Activated CD4-positive, alpha-beta T cell treated with anti-CD3 and anti-CD28 coated beads, Interleukin-2, amount 10 ng/mL, durations not matched to agents 24 days and 14 days (primary cell): ENCODE measurements at regions of chr11 and their contacts with region 1.

Region 1: DNA sequence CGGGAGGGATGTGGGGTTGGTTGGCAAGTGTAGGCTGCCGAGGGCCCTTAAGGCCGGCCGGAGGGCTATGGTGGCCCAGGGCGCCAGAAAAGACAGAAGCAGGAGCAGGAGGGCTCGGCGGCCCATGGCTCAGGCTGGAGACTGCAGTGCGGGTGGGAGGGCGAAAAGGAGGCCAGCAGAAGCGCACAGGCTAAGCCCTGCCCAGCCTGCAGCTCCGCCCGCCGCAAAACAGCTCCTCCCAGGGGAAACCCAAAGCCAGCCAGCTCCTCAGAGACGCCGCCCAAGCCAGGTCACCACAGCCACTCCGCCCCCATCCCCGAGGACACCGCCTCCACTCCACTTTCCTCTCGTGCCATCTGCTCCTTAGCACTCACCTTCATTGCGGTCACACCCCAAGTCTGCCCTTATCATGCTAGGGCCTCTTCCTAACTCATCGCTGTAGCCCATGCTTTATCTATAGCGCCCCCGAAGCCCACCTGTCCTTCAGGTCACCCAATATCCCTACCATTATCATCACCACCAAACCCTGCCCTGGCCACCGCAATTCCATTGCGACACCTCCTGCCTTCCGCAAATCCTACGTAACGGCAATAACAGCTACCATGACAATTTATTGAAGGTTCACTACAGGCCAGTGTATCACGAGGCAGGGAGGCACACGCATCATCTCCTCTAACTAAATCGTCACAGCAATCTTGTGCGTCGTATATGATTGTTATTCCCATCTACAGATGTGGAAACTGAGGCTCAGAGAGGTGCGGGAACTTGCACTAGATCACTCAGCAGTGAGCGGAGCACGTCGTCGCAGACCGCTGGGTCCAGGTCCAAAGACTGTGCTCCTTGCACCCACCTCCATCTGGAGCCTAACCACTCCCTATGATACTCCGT is at the start of gene PRCP:
- DNase-seq: peak; percentile 98
- H3K4me3 Mint-ChIP-seq: peak within 1 kb of the TSS; percentile 92
- H3K27ac Mint-ChIP-seq: peak within 1 kb of the TSS; percentile 100
- H3K4me1 Mint-ChIP-seq: peaks cover 51% of the 10 kb centered on the region
- H3K27me3 Mint-ChIP-seq: no peaks in the 10 kb centered on the region
- total RNA-seq, gene PRCP: 20.6 and 22.6 TPM in 2 replicates

Region 2: GRCh38 chr11:82867495-82868082 is 32.9 kb before region 1 on chr11:
- intact Hi-C with region 1: loop called (anchors 2 kb)
- DNase-seq: peak; percentile 93
- H3K4me3 Mint-ChIP-seq: no peak overlapping the region
- H3K27ac Mint-ChIP-seq: no peak overlapping the region
- H3K4me1 Mint-ChIP-seq: peaks cover 6% of the 10 kb centered on the region
- H3K27me3 Mint-ChIP-seq: peaks cover 2% of the 10 kb centered on the region

Region 3: DNA sequence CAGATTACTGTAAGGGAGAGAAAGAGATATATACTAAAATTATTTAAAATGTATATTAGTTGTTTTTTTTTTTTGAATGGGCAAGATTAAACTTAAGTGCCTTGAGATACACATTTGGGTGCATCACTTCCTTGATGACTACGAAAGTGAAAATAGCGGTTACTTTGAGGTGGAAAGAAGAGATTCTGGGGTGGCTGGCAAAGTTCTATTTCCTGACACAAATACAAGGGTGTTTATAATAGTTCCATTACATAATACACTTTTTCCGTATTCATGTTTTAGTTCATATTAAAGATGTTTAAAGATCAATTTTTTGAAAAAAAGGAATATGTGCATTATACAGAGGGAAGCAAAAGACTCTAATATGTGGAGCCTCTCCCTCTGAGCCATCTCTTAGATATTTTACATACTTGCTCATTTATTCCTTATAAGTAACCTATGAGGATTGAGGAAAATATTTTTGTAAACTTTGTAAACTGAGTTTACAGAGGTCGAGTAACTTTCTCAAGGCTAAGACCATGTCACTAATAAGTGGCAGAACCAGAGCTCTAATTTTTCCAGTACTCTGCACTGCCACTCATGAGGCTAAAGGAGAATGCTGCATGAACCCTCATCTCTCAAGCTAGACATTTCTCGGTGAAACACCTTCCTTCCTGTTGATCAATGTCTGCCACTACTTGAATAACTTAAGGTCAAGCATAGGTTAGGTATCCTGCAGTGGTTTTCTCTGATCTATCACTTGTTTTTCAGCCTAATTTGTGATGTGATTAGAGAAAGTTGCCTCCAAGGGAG is 59.7 kb after region 1 on chr11:
- intact Hi-C with region 1: loop called (anchors 2 kb)
- DNase-seq: peak; percentile 86
- H3K4me3 Mint-ChIP-seq: peak overlapping the region; percentile 62
- H3K27ac Mint-ChIP-seq: peak overlapping the region; percentile 62
- H3K4me1 Mint-ChIP-seq: peaks cover 51% of the 10 kb centered on the region
- H3K27me3 Mint-ChIP-seq: peaks cover 2% of the 10 kb centered on the region

Region 4: DNA sequence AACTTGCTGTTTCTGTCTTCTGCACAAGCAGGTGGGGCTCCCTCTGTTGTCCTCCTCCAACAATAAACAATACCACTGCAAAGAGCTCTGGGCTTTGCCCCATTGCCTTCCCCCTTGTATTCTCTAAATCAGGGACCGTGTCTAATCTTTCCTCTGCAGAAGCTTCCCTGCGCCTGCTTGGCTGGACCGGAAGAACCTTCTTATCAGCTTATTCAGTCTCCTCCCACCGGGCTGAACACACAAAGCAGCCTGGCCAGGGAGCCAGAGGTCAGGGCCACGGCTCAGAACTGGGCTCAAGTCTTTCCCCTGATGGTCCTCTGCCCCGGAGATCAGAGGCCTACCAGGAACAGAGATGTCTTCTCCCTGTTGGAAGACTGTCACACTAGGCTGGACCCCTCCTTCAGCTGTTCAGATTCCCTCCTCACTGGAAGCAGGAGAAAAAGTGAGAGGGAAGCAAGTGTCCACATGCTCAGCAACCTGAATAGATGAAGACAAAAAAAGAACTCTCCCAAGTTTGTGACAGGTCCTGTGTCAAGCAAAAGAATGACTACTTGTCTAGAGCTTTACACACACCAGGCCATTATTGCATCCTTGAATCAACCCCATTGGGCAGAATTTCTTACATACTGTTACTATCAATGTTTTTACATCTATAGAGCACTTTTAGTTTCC is 107.5 kb after region 1 on chr11:
- intact Hi-C with region 1: loop called (anchors 2 kb)
- DNase-seq: no peak
- H3K4me3 Mint-ChIP-seq: peak overlapping the region; percentile 6
- H3K27ac Mint-ChIP-seq: no peak overlapping the region
- H3K4me1 Mint-ChIP-seq: peaks cover 35% of the 10 kb centered on the region
- H3K27me3 Mint-ChIP-seq: no peaks in the 10 kb centered on the region

Region 5: GRCh38 chr11:83156150-83156995 is 255.9 kb after region 1 on chr11:
- intact Hi-C with region 1: loop called (anchors 1 kb)
- DNase-seq: no peak
- H3K4me3 Mint-ChIP-seq: peak overlapping the region; percentile 100
- H3K27ac Mint-ChIP-seq: peak overlapping the region; percentile 100
- H3K4me1 Mint-ChIP-seq: peaks cover 28% of the 10 kb centered on the region
- H3K27me3 Mint-ChIP-seq: no peaks in the 10 kb centered on the region

Region 6: DNA sequence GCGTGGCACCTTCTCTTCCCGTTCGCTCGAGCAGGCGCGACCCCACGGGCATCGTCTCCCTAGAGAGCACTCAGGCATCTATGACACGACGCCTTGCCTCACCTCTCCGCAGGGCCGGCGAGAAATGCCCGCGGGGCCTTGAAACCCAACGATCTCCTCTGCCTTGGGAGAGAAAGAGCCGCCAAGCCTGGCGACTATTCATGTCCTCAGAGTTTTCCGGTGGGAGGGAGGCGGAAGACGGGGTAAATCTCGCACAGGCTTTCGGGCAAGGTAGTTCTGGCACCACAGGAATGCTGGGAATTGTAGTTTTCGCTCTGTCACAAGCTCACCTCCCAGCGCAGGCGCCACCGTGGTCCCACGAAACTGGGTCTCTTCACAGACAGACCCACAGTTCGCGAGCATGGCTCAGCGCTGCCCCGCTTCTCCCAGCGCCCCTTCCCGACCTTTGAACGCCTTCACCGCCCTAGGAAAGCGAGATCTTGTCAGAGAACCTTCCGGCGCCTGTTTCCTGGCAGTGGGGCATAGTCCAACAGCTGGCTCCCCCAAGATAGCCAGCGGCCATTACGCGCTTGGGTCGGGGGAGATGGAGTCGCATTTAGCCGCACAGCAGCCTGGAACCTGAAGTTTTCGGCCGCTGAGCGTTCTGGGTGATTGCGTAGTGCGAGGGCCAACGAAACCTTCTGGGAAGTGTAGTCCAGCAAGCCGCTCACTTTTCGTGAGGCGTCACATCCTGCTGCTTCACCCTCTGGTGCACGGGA is 385.4 kb after region 1 on chr11 and contains the start of gene CCDC90B:
- intact Hi-C with region 1: loop called (anchors 1 kb)
- DNase-seq: peak; percentile 97
- H3K4me3 Mint-ChIP-seq: peak within 1 kb of the TSS; percentile 99
- H3K27ac Mint-ChIP-seq: peak within 1 kb of the TSS; percentile 99
- H3K4me1 Mint-ChIP-seq: peaks cover 20% of the 10 kb centered on the region
- H3K27me3 Mint-ChIP-seq: peaks cover 11% of the 10 kb centered on the region
- total RNA-seq, gene CCDC90B: 24.1 and 24.7 TPM in 2 replicates